A673 (cell line): ENCODE measurements at regions of chr19 and their contacts with region 1.

Region 1: DNA sequence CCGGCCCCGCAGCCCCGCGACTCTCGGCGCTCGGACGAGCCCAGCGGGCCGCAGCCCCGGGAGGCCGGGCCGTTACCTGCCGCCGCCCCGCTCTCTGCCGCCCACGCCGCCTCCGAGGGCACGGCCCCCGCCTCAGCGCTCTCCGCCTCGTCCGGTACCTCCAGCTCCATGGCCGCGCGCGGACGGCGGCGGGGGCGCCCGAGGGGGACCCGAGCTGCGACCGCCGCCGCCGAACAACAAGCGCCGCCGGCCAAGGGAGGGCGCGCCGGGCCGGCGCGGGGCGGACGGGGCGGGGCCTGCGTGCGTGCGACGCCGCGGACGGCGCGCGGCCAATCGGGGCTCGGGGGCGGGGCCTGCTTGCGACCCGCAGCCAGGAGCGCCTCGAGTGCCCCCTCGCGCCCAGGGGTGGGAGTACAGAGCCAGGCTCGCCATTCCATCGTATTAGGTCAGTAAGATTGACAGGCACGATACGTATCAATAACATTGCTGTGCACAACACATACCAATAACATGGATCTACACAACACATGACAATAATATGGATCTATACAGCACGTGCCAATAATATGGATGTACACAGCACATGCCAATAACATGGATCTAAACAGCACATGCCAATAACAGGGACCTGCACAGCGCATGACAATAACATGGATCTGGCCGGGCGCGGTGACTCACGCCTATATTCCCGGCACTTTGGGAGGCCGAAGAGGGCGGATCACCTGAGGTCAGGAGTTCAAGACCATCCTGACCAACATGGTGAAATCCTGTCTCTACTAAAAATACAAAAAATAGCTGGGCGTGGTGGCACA is at the start of gene PIP5K1C:
- DNase-seq: peak; percentile 90
- H3K4me3 ChIP-seq: peak within 1 kb of the TSS; percentile 81
- H3K27ac ChIP-seq: peak within 1 kb of the TSS; percentile 72
- H3K4me1 ChIP-seq: no peaks in the 10 kb centered on the region
- H3K27me3 ChIP-seq: no peaks in the 10 kb centered on the region
- CTCF ChIP-seq: peak; percentile 64
- total RNA-seq, gene PIP5K1C: 35.5 and 36.8 TPM in 2 replicates

Region 2: DNA sequence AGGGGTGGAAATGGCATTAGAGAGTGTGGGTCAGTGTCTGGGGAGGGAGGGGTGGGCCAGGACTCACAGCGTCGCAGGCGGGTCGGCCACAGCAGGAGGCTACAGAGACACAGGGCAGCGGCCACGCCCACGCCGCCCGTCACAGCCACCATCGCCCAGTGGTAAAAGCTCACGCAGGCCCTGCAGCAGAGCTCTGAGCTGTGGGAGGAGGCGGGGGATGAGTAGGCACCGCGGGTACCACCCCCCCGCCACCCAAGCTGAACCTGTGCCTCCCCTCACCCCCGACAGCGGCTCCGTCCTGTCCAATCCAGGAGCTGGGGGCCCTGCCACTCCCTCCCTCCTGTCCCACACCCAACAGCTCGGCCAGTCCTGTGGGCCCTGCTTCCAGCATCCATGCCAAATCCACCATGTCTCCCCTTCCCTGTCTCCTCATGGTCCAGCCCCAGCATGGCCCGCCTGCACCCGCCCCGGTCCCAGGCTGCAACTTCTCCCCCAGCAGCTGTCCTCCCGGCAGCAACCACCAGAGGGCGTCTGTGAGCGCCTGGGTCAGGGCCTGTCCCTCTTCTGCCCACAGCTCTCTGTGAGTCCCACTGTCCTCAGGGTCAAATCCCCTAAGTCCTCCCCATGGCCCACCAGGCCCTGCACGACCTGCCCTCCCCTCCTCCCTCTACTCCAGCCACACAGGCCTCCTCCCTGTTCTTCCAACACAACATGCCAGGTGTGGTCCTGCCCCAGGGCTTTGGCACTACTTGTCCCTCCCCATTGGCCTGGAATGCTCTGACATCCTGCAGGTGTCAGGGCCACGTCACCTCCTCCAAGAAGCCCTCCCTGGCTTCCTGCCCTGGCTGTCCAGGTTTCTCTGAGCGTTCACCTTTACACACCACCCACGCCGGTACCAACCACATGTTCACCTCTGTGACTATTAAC is 155.4 kb before region 1 on chr19:
- CTCF ChIA-PET with region 1: no interaction called
- POLR2A ChIA-PET with region 1: no interaction called
- intact Hi-C with region 1: loop called (anchors 10 kb)
- DNase-seq: peak; percentile 61
- H3K4me3 ChIP-seq: no peak overlapping the region
- H3K27ac ChIP-seq: no peak overlapping the region
- H3K4me1 ChIP-seq: no peaks in the 10 kb centered on the region
- H3K27me3 ChIP-seq: no peaks in the 10 kb centered on the region
- CTCF ChIP-seq: peak; percentile 97

Region 3: GRCh38 chr19:3665681-3666544 is 34.5 kb before region 1 on chr19:
- CTCF ChIA-PET with region 1: no interaction called
- POLR2A ChIA-PET with region 1: no interaction called
- intact Hi-C with region 1: loop called (anchors 2 kb)
- DNase-seq: peak; percentile 43
- H3K4me3 ChIP-seq: no peak overlapping the region
- H3K27ac ChIP-seq: no peak overlapping the region
- H3K4me1 ChIP-seq: no peaks in the 10 kb centered on the region
- H3K27me3 ChIP-seq: no peaks in the 10 kb centered on the region
- CTCF ChIP-seq: peak; percentile 95

Region 4: DNA sequence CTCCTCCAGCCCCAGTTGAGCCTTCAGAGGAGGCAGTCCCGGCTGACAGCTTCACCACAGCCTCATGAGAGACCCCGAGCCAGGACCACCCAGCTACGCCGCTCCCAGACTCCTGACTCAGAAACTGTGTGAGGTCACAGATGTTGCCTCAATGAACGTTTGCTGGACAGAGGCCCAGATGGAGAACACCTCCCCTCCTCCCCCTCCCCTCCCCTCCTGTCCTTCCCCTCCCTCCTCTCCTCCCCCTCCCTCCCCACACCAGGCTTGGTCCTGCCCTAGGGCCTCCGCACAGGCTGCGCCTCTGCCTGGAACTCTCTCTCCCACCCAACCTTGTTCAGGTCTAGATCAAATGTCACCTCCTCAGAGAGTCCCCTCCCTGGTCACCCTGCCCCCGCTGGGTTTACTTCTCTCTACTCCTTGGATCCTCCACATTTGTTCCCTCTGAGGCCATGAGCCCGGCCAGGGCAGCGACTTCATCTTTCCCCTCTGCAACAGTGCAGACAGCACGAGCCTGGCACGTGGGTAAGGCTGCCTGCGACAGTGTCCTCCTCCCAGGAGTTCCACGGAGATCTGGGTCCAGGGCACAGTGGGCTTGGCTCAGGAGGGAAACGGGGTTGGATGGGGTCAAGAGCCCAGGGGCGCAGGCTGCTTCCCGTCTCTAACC is 17.6 kb before region 1 on chr19:
- CTCF ChIA-PET with region 1: no interaction called
- POLR2A ChIA-PET with region 1: interaction called, 18 read pairs
- intact Hi-C with region 1: no loop called
- DNase-seq: no peak
- H3K4me3 ChIP-seq: no peak overlapping the region
- H3K27ac ChIP-seq: peak overlapping the region; percentile 83
- H3K4me1 ChIP-seq: peaks cover 19% of the 10 kb centered on the region
- H3K27me3 ChIP-seq: no peaks in the 10 kb centered on the region
- CTCF ChIP-seq: no peak

Region 5: DNA sequence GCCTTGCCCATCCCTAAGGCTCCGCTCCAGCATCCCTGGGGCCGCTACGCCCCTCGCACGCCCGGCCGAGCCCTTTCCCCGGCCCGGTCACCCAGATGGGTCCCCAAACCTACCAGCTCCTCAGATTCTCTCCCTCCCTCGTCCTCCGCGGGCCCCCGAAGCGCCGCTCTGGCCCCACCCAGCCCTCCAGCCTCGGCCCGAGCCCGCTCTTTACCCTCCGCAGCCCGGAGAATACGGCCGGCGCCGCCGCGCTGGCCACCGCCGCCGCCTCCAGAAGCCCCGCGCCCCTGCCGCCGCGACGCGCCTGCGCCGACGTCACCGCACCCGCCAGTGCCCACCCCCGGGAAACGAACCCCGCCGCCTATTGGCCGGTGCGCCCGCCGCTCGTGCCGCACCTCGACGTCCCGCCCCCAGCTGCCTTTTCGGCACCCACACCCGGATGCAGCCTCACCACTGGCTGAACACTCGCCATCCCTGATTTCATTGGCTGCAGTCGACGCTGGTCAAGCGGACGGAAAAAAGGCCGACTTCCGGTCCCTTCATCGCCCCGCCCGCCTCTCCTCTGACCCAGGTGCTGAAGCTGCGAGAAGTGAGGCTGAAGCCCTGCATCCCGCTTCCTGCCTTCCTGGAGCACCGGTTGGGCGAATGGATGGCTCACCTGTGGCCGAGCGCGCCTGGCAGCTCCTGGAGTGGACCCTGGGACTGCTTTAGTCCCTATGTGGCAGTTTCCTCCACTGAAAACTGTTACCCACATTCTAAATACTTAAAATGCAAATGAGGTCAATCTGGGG is 270.6 kb after region 1 on chr19 and contains the start of gene DAPK3:
- CTCF ChIA-PET with region 1: no interaction called
- POLR2A ChIA-PET with region 1: no interaction called
- intact Hi-C with region 1: no loop called
- DNase-seq: peak; percentile 97
- H3K4me3 ChIP-seq: peak within 1 kb of the TSS; percentile 93
- H3K27ac ChIP-seq: peak within 1 kb of the TSS; percentile 94
- H3K4me1 ChIP-seq: peaks cover 20% of the 10 kb centered on the region
- H3K27me3 ChIP-seq: no peaks in the 10 kb centered on the region
- CTCF ChIP-seq: no peak
- total RNA-seq, gene DAPK3: 58.3 and 65.9 TPM in 2 replicates